ENCODE measurements at regions of chr16 and their contacts with region 1.

Region 1: GRCh38 chr16:58487566-58488351 is 12.2 kb upstream of the NDRG4 start:
- DNase-seq: peak; percentile 53 to 86 (median 63)
- ATAC-seq: peak; percentile 84
- H3K4me3 ChIP-seq: no peak overlapping the region
- H3K4me3 Mint-ChIP-seq: no peak overlapping the region
- H3K27ac ChIP-seq: no peak overlapping the region
- H3K27ac Mint-ChIP-seq: no peak overlapping the region
- H3K4me1 ChIP-seq: peaks cover 7% of the 10 kb centered on the region
- H3K4me1 Mint-ChIP-seq: no peaks in the 10 kb centered on the region
- H3K27me3 ChIP-seq: peaks cover 0 to 2% of the 10 kb centered on the region in 2 experiments
- H3K27me3 Mint-ChIP-seq: peaks cover 13% of the 10 kb centered on the region
- CTCF ChIP-seq: peak; percentile 93

Region 2: DNA sequence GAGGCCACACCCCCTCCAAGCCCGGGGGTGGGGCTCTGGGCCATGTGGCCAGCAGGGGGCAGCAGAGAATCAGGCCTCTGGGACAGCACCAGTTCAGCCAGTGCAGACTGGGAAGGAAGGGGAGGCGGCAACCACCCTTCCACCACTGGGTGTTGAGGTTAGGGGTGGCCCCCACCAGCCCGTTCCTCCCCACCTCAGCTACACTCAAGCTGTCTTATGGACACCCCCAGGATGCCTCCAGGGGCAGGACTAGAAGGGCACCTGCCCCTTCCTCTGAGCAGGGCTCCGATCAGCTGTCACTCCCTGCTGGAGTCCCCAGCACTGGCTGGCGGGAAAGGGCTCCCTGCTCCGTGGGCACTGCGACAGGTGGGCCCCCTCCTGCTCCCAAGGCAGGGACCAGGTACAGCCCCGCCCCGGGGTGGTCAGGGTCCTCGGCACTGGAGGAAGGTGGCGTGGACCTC is 730.4 kb before region 1 on chr16:
- CTCF ChIA-PET with region 1: no interaction called
- POLR2A ChIA-PET with region 1: no interaction called
- intact Hi-C with region 1: loop called in 1 of 2 experiments (anchors 5 kb)
- DNase-seq: peak; percentile 79 to 93 (median 88)
- ATAC-seq: peak; percentile 98
- H3K4me3 ChIP-seq: no peak overlapping the region
- H3K4me3 Mint-ChIP-seq: no peak overlapping the region
- H3K27ac ChIP-seq: no peak overlapping the region
- H3K27ac Mint-ChIP-seq: no peak overlapping the region
- H3K4me1 ChIP-seq: peaks cover 15% of the 10 kb centered on the region
- H3K4me1 Mint-ChIP-seq: no peaks in the 10 kb centered on the region
- H3K27me3 ChIP-seq: no peaks in the 10 kb centered on the region
- H3K27me3 Mint-ChIP-seq: no peaks in the 10 kb centered on the region
- CTCF ChIP-seq: peak; percentile 89

Region 3: GRCh38 chr16:57899771-57900661 is 587.7 kb before region 1 on chr16:
- CTCF ChIA-PET with region 1: no interaction called
- POLR2A ChIA-PET with region 1: no interaction called
- intact Hi-C with region 1: loop called (anchors 2 to 5 kb)
- DNase-seq: peak; percentile 62 to 90 (median 78)
- ATAC-seq: peak; percentile 67
- H3K4me3 ChIP-seq: no peak overlapping the region
- H3K4me3 Mint-ChIP-seq: no peak overlapping the region
- H3K27ac ChIP-seq: no peak overlapping the region
- H3K27ac Mint-ChIP-seq: no peak overlapping the region
- H3K4me1 ChIP-seq: peaks cover 4% of the 10 kb centered on the region
- H3K4me1 Mint-ChIP-seq: peaks cover 6% of the 10 kb centered on the region
- H3K27me3 ChIP-seq: peaks cover 0 to 6% of the 10 kb centered on the region in 2 experiments
- H3K27me3 Mint-ChIP-seq: peaks cover 24% of the 10 kb centered on the region
- CTCF ChIP-seq: peak; percentile 83

Region 4: GRCh38 chr16:58018804-58019203 is 469.0 kb before region 1 on chr16:
- CTCF ChIA-PET with region 1: no interaction called
- POLR2A ChIA-PET with region 1: no interaction called
- intact Hi-C with region 1: loop called (anchors 5 kb)
- DNase-seq: no peak
- ATAC-seq: no peak
- H3K4me3 ChIP-seq: no peak overlapping the region
- H3K4me3 Mint-ChIP-seq: no peak overlapping the region
- H3K27ac ChIP-seq: no peak overlapping the region
- H3K27ac Mint-ChIP-seq: no peak overlapping the region
- H3K4me1 ChIP-seq: peaks cover 13% of the 10 kb centered on the region
- H3K4me1 Mint-ChIP-seq: peaks cover 10% of the 10 kb centered on the region
- H3K27me3 ChIP-seq: no peaks in the 10 kb centered on the region
- H3K27me3 Mint-ChIP-seq: no peaks in the 10 kb centered on the region
- CTCF ChIP-seq: no peak

Region 5: DNA sequence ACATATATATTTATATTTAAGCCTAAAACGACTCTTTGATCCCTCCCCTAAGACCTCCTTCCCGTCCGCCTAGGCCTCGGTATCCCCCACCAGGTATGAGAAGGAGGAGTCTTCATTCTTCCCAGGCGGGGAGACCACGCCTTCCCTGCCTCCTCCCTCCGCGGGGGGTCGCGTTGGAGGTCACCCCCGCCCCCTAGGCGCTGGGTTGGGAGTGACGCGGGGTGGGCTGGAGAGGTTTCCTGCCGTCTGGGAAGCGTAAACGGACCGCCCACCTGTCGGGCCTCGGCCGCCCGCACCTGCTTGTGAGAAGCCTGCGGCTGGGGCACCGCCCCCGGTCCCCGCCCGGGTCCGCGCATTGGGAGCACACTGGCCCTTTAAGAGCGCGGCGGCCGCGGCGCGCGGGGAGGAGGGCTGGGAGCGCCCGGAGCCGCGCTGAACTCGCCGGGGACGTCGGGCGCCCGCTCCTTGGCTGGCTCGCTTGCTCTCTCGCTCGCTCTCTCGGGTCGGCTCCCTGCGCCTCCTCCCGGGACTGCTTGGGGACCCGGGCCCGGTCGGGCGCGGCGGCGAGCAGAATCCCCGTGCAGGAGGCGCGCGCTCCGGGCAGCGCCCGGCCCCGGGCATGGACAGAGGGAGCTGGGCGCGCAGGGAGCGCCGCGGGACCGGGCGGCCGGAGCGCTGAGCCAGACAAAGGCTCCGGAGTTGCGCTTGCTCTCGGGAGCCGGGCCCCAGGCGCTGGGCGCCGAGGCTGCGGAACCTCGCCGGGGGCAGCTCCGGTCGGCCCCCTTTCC is 462.2 kb before region 1 on chr16 and contains the start of gene MMP15:
- CTCF ChIA-PET with region 1: no interaction called
- POLR2A ChIA-PET with region 1: no interaction called
- intact Hi-C with region 1: loop called in 1 of 2 experiments (anchors 5 kb)
- DNase-seq: peak; percentile 22 to 80 (median 56)
- ATAC-seq: peak; percentile 61
- H3K4me3 ChIP-seq: peak within 1 kb of the TSS; percentile 61
- H3K4me3 Mint-ChIP-seq: peak within 1 kb of the TSS; percentile 96
- H3K27ac ChIP-seq: no peak within 1 kb of the TSS
- H3K27ac Mint-ChIP-seq: peak within 1 kb of the TSS; percentile 81
- H3K4me1 ChIP-seq: peaks cover 34% of the 10 kb centered on the region
- H3K4me1 Mint-ChIP-seq: peaks cover 18% of the 10 kb centered on the region
- H3K27me3 ChIP-seq: peaks cover 7 to 13% of the 10 kb centered on the region in 2 experiments
- H3K27me3 Mint-ChIP-seq: peaks cover 9% of the 10 kb centered on the region
- CTCF ChIP-seq: no peak
- total RNA-seq, gene MMP15: 0.25 to 0.31 TPM

Region 6: DNA sequence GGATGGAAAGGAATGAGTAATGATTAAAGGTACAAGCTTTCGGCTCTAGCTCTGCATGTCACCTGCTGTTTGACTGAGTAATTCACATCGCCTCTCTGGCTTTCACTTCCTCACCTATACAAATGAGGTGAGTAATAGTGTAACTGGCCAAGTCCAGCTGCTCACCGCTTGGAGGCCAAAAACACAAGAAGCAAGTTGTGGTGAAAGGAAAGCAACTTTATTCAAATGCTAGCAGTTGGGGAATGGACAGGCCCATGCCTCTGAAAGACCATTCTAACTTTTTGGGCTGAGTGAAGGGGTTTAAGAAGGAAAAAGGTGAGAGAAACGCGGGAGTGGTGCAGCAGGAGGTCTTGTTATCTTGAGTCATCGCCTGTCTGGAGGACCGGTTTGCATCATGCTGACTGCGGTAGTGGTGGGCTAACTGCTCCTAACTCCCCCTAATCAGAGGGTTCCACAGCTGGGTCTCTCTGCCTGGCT is 244.2 kb before region 1 on chr16:
- CTCF ChIA-PET with region 1: no interaction called
- POLR2A ChIA-PET with region 1: no interaction called
- intact Hi-C with region 1: no loop called
- DNase-seq: no peak
- ATAC-seq: no peak
- H3K4me3 ChIP-seq: no peak overlapping the region
- H3K4me3 Mint-ChIP-seq: no peak overlapping the region
- H3K27ac ChIP-seq: no peak overlapping the region
- H3K27ac Mint-ChIP-seq: no peak overlapping the region
- H3K4me1 ChIP-seq: no peaks in the 10 kb centered on the region
- H3K4me1 Mint-ChIP-seq: no peaks in the 10 kb centered on the region
- H3K27me3 ChIP-seq: peaks cover 4 to 5% of the 10 kb centered on the region in 2 experiments
- H3K27me3 Mint-ChIP-seq: peaks cover 45% of the 10 kb centered on the region
- CTCF ChIP-seq: no peak

Region 7: DNA sequence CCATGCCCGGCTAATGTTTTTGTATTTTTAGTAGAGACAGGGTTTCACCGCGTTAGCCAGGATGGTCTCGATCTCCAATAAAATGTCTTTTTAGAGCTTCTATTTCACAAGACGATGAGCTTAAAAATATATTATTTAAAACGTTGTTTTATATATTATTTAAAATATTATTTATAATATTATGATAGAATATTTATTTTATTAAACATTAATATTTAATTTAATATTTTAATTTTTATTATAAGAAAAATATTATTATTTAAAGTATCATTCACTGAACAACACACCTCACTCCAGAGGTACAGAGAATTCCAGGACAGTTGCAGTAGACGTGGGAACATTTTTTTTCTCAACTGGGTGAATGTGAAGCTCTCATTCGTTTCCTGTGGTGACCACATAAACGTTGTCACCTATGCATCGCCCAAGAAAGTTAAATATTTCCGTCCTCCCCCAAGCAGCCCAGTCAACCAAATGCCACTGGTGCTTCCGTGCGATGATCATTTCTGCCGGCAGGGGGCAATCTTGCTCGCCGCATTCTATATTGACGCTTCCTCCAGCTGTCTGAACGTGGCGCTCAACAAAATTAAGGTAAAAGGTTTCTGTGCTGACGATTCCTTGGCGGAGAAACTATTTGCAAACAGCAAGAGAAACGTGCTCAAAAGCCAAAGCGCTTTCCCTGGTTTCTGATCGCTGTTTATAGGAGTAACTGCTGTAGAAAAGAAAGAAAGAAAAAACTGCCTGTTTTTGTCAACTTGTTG is 151.2 kb before region 1 on chr16:
- CTCF ChIA-PET with region 1: interaction called, 77 read pairs
- POLR2A ChIA-PET with region 1: interaction called, 4 read pairs
- intact Hi-C with region 1: loop called (anchors 1 kb)
- DNase-seq: peak; percentile 61 to 88 (median 81)
- ATAC-seq: peak; percentile 85
- H3K4me3 ChIP-seq: no peak overlapping the region
- H3K4me3 Mint-ChIP-seq: peak overlapping the region; percentile 23
- H3K27ac ChIP-seq: no peak overlapping the region
- H3K27ac Mint-ChIP-seq: no peak overlapping the region
- H3K4me1 ChIP-seq: peaks cover 8% of the 10 kb centered on the region
- H3K4me1 Mint-ChIP-seq: peaks cover 7% of the 10 kb centered on the region
- H3K27me3 ChIP-seq: peaks cover 0 to 1% of the 10 kb centered on the region in 2 experiments
- H3K27me3 Mint-ChIP-seq: peaks cover 14% of the 10 kb centered on the region
- CTCF ChIP-seq: peak; percentile 97

Region 8: GRCh38 chr16:58366247-58367031 is 121.3 kb before region 1 on chr16:
- CTCF ChIA-PET with region 1: no interaction called
- POLR2A ChIA-PET with region 1: no interaction called
- intact Hi-C with region 1: no loop called
- DNase-seq: no peak
- ATAC-seq: no peak
- H3K4me3 ChIP-seq: no peak overlapping the region
- H3K4me3 Mint-ChIP-seq: no peak overlapping the region
- H3K27ac ChIP-seq: no peak overlapping the region
- H3K27ac Mint-ChIP-seq: no peak overlapping the region
- H3K4me1 ChIP-seq: no peaks in the 10 kb centered on the region
- H3K4me1 Mint-ChIP-seq: no peaks in the 10 kb centered on the region
- H3K27me3 ChIP-seq: peaks cover 15 to 17% of the 10 kb centered on the region in 2 experiments
- H3K27me3 Mint-ChIP-seq: peaks cover 43% of the 10 kb centered on the region
- CTCF ChIP-seq: no peak